Transverse colon (tissue), 4 donors: ENCODE measurements at regions of chr2 and their contacts with region 1.

Region 1: GRCh38 chr2:32772638-32773447 is 145.0 kb downstream of the TTC27 start:
- DNase-seq: no peak
- H3K4me3 ChIP-seq: no peak overlapping the region
- H3K27ac ChIP-seq: no peak overlapping the region
- H3K4me1 ChIP-seq: no peaks in the 10 kb centered on the region
- H3K27me3 ChIP-seq: no peaks in the 10 kb centered on the region
- CTCF ChIP-seq: peak; percentile 51 to 81 (median 66)
- EP300 ChIP-seq: no peak
- POLR2A ChIP-seq: no peak

Region 2: GRCh38 chr2:32732912-32733472 is 39.9 kb before region 1 on chr2:
- in situ Hi-C with region 1: no loop called
- intact Hi-C with region 1: no loop called
- DNase-seq: no peak
- H3K4me3 ChIP-seq: no peak overlapping the region
- H3K27ac ChIP-seq: no peak overlapping the region
- H3K4me1 ChIP-seq: no peaks in the 10 kb centered on the region
- H3K27me3 ChIP-seq: no peaks in the 10 kb centered on the region
- CTCF ChIP-seq: no peak
- EP300 ChIP-seq: no peak
- POLR2A ChIP-seq: no peak

Region 3: GRCh38 chr2:32946314-32947075 is 173.7 kb after region 1 on chr2 and contains the start of gene LTBP1:
- in situ Hi-C with region 1: loop called in 1 of 4 experiments (anchors 10 kb)
- intact Hi-C with region 1: no loop called
- DNase-seq: peak; percentile 84
- H3K4me3 ChIP-seq: peak within 1 kb of the TSS; percentile 62 to 96 (median 88)
- H3K27ac ChIP-seq: peak within 1 kb of the TSS; percentile 85 to 95 (median 92)
- H3K4me1 ChIP-seq: peaks cover 0 to 24% (median 10%) of the 10 kb centered on the region in 4 donors
- H3K27me3 ChIP-seq: peaks cover 4% of the 10 kb centered on the region
- CTCF ChIP-seq: peak; percentile 65 to 73 (median 71)
- EP300 ChIP-seq: no peak
- POLR2A ChIP-seq: peak; percentile 18
- total RNA-seq, gene LTBP1: 15.8 to 56.7 (median 28.3) TPM

Region 4: GRCh38 chr2:33372940-33373553 is 600.2 kb after region 1 on chr2:
- in situ Hi-C with region 1: loop called (anchors 25 kb)
- intact Hi-C with region 1: no loop called
- DNase-seq: no peak
- H3K4me3 ChIP-seq: no peak overlapping the region
- H3K27ac ChIP-seq: no peak overlapping the region
- H3K4me1 ChIP-seq: no peaks in the 10 kb centered on the region
- H3K27me3 ChIP-seq: no peaks in the 10 kb centered on the region
- CTCF ChIP-seq: peak; percentile 71 to 83 (median 78)
- EP300 ChIP-seq: no peak
- POLR2A ChIP-seq: no peak

Region 5: GRCh38 chr2:33395655-33396249 is 622.9 kb after region 1 on chr2:
- in situ Hi-C with region 1: loop called in 3 of 4 experiments (anchors 25 kb)
- intact Hi-C with region 1: no loop called
- DNase-seq: peak; percentile 57
- H3K4me3 ChIP-seq: no peak overlapping the region
- H3K27ac ChIP-seq: no peak overlapping the region
- H3K4me1 ChIP-seq: no peaks in the 10 kb centered on the region
- H3K27me3 ChIP-seq: no peaks in the 10 kb centered on the region
- CTCF ChIP-seq: peak; percentile 39 to 57 (median 51)
- EP300 ChIP-seq: no peak
- POLR2A ChIP-seq: no peak